PC-9 (cell line): ENCODE measurements at regions of chr17 and their contacts with region 1.

Region 1: GRCh38 chr17:68377862-68378770 is 79.2 kb downstream of the WIPI1 start:
- DNase-seq: peak; percentile 49 to 75
- H3K4me3 ChIP-seq: peak overlapping the region; percentile 49
- H3K27ac ChIP-seq: peak overlapping the region; percentile 87
- H3K4me1 ChIP-seq: peaks cover 63% of the 10 kb centered on the region
- H3K27me3 ChIP-seq: no peaks in the 10 kb centered on the region
- CTCF ChIP-seq: no peak

Region 2: GRCh38 chr17:68205251-68205807 is 172.8 kb before region 1 on chr17:
- CTCF ChIA-PET with region 1: no interaction called
- POLR2A ChIA-PET with region 1: no interaction called
- intact Hi-C with region 1: no loop called
- DNase-seq: peak; percentile 65 to 85
- H3K4me3 ChIP-seq: peak overlapping the region; percentile 74
- H3K27ac ChIP-seq: no peak overlapping the region
- H3K4me1 ChIP-seq: peaks cover 14% of the 10 kb centered on the region; the same call in 1 of the 2 replicates
- H3K27me3 ChIP-seq: no peaks in the 10 kb centered on the region
- CTCF ChIP-seq: peak; percentile 71

Region 3: GRCh38 chr17:68291844-68292695 is 86.0 kb before region 1 on chr17:
- CTCF ChIA-PET with region 1: no interaction called
- POLR2A ChIA-PET with region 1: no interaction called
- intact Hi-C with region 1: loop called (anchors 5 kb)
- DNase-seq: peak; percentile 76 to 78
- H3K4me3 ChIP-seq: peak overlapping the region; percentile 76
- H3K27ac ChIP-seq: peak overlapping the region; percentile 58
- H3K4me1 ChIP-seq: peaks cover 20% of the 10 kb centered on the region
- H3K27me3 ChIP-seq: no peaks in the 10 kb centered on the region
- CTCF ChIP-seq: peak; percentile 33; the same call in 1 of the 2 replicates

Region 4: DNA sequence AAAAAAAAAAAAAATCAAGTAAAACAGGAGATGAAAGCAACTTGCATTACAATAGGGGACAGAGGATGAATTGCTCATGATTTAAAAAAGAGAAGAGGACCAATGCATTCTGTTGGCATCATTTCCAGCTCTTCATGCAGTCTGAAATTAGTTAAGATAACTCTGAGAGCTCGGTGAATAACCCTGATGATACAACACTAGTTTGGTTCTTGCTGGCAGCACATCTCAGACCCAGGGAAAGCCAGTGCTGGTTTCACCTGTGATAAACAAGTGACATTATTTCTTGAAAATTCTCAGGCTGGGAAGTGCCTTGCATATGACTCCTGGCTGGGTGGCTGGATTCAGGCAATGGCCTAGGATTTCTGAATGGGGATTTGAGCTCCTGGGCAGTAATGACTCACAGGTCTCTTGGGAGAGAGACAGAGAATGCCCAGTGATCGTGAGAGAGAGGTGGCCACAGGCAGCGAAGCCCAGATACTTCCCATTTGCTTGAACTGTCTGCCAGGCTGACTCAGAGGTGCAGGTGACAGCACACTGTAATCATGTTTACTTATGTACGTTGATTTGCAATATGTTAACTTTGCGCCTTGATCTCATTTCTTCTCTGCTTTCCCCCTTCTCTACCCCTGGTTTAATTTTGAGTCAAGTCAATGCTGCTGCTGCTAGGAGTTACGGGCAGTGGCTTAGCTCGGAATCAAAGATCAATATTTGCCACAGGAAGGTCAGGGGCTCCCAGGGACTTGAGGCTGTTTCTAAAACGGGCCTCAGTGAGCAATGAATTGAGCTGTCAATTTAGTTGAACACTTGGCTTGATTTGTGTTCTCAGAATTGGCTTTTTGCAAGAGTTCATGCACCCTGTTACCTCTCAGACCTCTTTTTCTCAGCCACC is 59.8 kb before region 1 on chr17:
- CTCF ChIA-PET with region 1: no interaction called
- POLR2A ChIA-PET with region 1: interaction called, 10 read pairs
- intact Hi-C with region 1: no loop called
- DNase-seq: peak; percentile 71 to 97
- H3K4me3 ChIP-seq: peak overlapping the region; percentile 25; the same call in 1 of the 2 replicates
- H3K27ac ChIP-seq: peak overlapping the region; percentile 82
- H3K4me1 ChIP-seq: peaks cover 45% of the 10 kb centered on the region
- H3K27me3 ChIP-seq: no peaks in the 10 kb centered on the region
- CTCF ChIP-seq: no peak

Region 5: DNA sequence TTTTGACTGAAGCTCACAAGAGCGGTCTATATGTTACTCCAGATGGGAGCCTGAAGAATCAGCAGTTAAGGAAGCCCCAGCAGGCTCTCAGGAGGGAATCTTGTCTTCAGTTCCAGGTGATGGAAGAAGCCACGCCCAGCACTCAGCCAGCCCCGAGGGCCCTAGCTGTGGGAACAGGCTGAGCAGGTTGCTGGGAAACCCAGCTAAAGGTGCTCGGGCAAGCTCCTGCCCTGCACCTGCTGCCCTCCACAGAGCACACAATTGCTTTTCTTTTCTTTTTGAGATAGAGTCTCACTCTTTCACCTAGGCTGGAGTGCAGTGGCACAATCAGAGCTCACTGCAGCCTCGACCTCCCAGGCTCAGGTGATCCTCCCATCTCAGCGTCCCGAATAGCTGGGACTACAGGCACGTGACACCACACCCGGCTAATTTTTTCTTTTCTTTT is 46.8 kb after region 1 on chr17:
- CTCF ChIA-PET with region 1: no interaction called
- POLR2A ChIA-PET with region 1: no interaction called
- intact Hi-C with region 1: no loop called
- DNase-seq: peak; percentile 74 to 80
- H3K4me3 ChIP-seq: no peak overlapping the region
- H3K27ac ChIP-seq: no peak overlapping the region
- H3K4me1 ChIP-seq: peaks cover 11% of the 10 kb centered on the region
- H3K27me3 ChIP-seq: no peaks in the 10 kb centered on the region
- CTCF ChIP-seq: no peak

Region 6: GRCh38 chr17:68657166-68657565 is 279.1 kb after region 1 on chr17:
- CTCF ChIA-PET with region 1: no interaction called
- POLR2A ChIA-PET with region 1: no interaction called
- intact Hi-C with region 1: no loop called
- DNase-seq: no peak
- H3K4me3 ChIP-seq: no peak overlapping the region
- H3K27ac ChIP-seq: no peak overlapping the region
- H3K4me1 ChIP-seq: no peaks in the 10 kb centered on the region
- H3K27me3 ChIP-seq: peaks cover 39% of the 10 kb centered on the region
- CTCF ChIP-seq: no peak